ENCODE measurements at regions of chr14 and their contacts with region 1.

Region 1: GRCh38 chr14:55354500-55354899 is 57.1 kb downstream of the ATG14 start:
- DNase-seq: peak; percentile 24 to 82 (median 66)
- ATAC-seq: peak; percentile 90 to 95 (median 92)
- H3K4me3 ChIP-seq: peak overlapping the region in 1 of 2 donors; percentile 16
- H3K4me3 Mint-ChIP-seq: peak overlapping the region; percentile 55 to 80 (median 55)
- H3K27ac ChIP-seq: peak overlapping the region; percentile 77
- H3K27ac Mint-ChIP-seq: peak overlapping the region; percentile 89 to 98
- H3K4me1 ChIP-seq: peaks cover 9 to 17% of the 10 kb centered on the region in 2 experiments
- H3K4me1 Mint-ChIP-seq: peaks cover 17 to 38% (median 30%) of the 10 kb centered on the region in 3 donors
- H3K27me3 ChIP-seq: no peaks in the 10 kb centered on the region
- H3K27me3 Mint-ChIP-seq: no peaks in the 10 kb centered on the region

Region 2: GRCh38 chr14:55094321-55095157 is 260.0 kb before region 1 on chr14:
- CTCF ChIA-PET with region 1: interaction called in 1 of 2 experiments, 5 read pairs
- POLR2A ChIA-PET with region 1: interaction called in 1 of 2 experiments, 15 read pairs
- DNase-seq: no peak
- ATAC-seq: no peak
- H3K4me3 ChIP-seq: no peak overlapping the region
- H3K4me3 Mint-ChIP-seq: no peak overlapping the region
- H3K27ac ChIP-seq: no peak overlapping the region
- H3K27ac Mint-ChIP-seq: no peak overlapping the region
- H3K4me1 ChIP-seq: peaks cover 0 to 17% of the 10 kb centered on the region in 2 experiments
- H3K4me1 Mint-ChIP-seq: peaks cover 9 to 20% (median 20%) of the 10 kb centered on the region in 3 donors
- H3K27me3 ChIP-seq: no peaks in the 10 kb centered on the region
- H3K27me3 Mint-ChIP-seq: no peaks in the 10 kb centered on the region

Region 3: DNA sequence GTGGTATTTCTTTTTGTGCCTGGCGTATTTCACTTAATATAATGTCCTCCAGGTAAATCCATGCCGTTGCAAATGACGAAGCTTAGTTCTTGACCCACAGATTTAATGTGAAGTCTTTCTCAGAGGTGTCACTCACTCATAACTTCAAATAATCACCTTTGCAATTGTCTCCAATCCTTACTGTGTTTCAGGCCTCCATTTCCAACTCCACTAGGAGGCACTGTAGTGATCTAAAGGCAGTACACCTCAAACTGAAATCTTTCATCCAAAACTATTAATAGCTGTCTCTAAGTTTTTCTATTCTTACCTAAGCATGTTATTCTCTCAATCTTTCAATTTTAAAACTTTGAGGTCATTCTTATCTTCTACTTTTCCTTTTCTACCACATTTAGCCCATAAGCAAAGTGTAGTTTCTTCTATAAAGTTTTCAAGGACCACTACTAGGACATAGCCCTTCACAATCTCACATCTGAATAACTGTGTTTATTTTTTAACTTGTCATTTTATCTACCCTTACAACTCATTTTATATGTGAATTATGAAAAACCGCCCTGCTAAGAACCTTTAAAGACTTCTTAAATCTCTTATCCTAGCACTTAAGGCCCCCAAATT is 108.7 kb before region 1 on chr14:
- CTCF ChIA-PET with region 1: interaction called, 14 to 39 read pairs
- POLR2A ChIA-PET with region 1: interaction called in 1 of 2 experiments, 3 read pairs
- DNase-seq: peak in 23 of 35 experiments; percentile 3 to 65 (median 22)
- ATAC-seq: peak in 3 of 4 experiments; percentile 56 to 67 (median 66)
- H3K4me3 ChIP-seq: no peak overlapping the region
- H3K4me3 Mint-ChIP-seq: no peak overlapping the region
- H3K27ac ChIP-seq: no peak overlapping the region
- H3K27ac Mint-ChIP-seq: no peak overlapping the region
- H3K4me1 ChIP-seq: no peaks in the 10 kb centered on the region
- H3K4me1 Mint-ChIP-seq: no peaks in the 10 kb centered on the region
- H3K27me3 ChIP-seq: peaks cover 0 to 3% of the 10 kb centered on the region in 2 experiments
- H3K27me3 Mint-ChIP-seq: peaks cover 15 to 17% of the 10 kb centered on the region in 2 donors

Region 4: DNA sequence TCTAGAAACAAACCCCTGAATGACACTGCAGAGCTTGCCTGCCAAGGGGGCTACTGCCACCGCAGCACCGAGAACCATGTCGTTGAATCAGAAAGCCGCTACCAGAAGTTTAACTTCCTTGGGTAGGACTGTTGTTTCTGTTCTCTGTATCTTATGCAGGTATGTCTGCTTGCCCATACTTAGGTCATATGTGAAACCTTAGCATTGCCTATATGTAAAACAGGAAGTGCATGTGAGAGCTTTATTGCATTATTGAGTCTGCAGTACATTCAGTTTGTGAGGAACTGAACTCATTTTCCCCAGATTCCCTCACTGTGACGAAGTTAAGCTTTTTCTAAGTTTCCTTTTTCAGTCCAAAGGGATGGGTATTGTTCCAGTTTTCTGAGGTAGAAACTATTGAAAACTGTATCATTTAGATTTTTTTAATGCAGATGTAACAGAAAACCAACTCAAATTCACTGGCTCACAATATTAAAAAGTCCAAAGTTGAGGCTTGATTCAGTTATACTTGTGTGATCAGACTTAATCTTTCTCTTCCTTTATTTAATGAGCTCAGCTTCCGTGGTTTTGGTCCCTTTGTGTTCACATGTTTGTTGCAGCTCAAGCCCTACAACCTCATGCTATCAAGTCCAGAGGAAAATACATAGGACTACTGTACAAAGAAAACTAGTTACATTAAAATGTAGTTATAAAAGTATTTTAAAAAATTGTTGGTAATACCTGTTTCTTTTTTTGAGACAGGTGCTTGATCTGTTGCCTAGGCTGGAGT is 76.3 kb before region 1 on chr14:
- CTCF ChIA-PET with region 1: interaction called in 1 of 2 experiments, 85 read pairs
- POLR2A ChIA-PET with region 1: interaction called in 1 of 2 experiments, 3 read pairs
- DNase-seq: peak in 2 of 35 experiments; percentile 0 to 20
- ATAC-seq: peak; percentile 48 to 76 (median 68)
- H3K4me3 ChIP-seq: no peak overlapping the region
- H3K4me3 Mint-ChIP-seq: peak overlapping the region; percentile 56 to 65 (median 65)
- H3K27ac ChIP-seq: peak overlapping the region; percentile 24
- H3K27ac Mint-ChIP-seq: peak overlapping the region; percentile 82 to 86
- H3K4me1 ChIP-seq: peaks cover 10 to 14% of the 10 kb centered on the region in 2 experiments
- H3K4me1 Mint-ChIP-seq: peaks cover 76 to 77% (median 77%) of the 10 kb centered on the region in 3 donors
- H3K27me3 ChIP-seq: no peaks in the 10 kb centered on the region
- H3K27me3 Mint-ChIP-seq: no peaks in the 10 kb centered on the region

Region 5: GRCh38 chr14:55316567-55316966 is 37.9 kb before region 1 on chr14:
- CTCF ChIA-PET with region 1: interaction called, 3 to 10 read pairs
- POLR2A ChIA-PET with region 1: interaction called in 1 of 2 experiments, 8 read pairs
- DNase-seq: no peak
- ATAC-seq: no peak
- H3K4me3 ChIP-seq: no peak overlapping the region
- H3K4me3 Mint-ChIP-seq: no peak overlapping the region
- H3K27ac ChIP-seq: no peak overlapping the region
- H3K27ac Mint-ChIP-seq: peak overlapping the region in 1 of 2 donors; percentile 61
- H3K4me1 ChIP-seq: no peaks in the 10 kb centered on the region
- H3K4me1 Mint-ChIP-seq: peaks cover 0 to 24% (median 11%) of the 10 kb centered on the region in 3 donors
- H3K27me3 ChIP-seq: no peaks in the 10 kb centered on the region
- H3K27me3 Mint-ChIP-seq: no peaks in the 10 kb centered on the region

Region 6: DNA sequence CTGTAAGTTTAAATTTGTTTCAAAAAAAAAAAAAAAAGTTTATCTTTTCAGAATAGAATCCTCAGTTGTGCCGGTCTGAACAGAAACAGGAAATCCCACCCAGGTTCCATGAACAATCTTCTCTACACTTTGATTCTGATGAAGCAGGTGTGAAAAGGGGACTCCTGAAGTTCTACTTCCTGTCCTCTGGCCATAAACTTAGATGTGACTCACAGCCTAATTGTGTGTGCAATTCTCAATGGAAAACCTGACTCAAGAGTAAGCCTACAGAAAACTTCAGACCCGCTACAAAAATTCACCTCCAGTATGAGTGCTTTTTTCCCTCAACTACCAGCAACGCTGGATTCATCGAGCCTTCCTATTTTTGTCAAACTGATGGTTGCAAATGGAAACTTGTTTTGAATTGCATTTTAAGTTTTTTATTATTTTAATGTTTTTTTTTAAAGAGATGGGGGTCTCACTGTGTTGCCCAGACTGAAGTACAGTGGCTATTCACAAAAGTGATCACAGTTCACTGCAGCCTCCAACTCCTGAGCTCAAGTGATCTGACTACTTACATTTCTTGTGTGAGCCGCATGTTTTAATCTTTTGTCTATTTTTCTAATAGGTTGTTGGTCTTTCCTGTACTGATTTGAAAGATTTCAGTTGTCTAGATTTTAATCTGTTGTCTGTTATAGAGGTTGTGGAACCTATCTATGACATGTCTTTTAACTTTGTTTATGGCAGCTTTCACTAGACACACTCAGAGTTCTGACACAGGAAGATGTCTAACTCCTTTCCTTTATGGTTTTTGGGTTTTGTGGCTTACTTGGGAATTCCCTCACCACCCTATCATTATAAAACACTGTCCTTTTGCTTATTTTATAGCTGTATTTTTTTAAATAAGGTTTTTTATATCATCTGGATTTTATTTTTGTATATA is 19.5 kb after region 1 on chr14:
- CTCF ChIA-PET with region 1: interaction called, 3 to 15 read pairs
- POLR2A ChIA-PET with region 1: no interaction called
- DNase-seq: peak in 4 of 35 experiments; percentile 11 to 82 (median 28)
- ATAC-seq: peak; percentile 70 to 92 (median 78)
- H3K4me3 ChIP-seq: no peak overlapping the region
- H3K4me3 Mint-ChIP-seq: peak overlapping the region; percentile 35 to 73 (median 46)
- H3K27ac ChIP-seq: peak overlapping the region; percentile 80
- H3K27ac Mint-ChIP-seq: peak overlapping the region; percentile 90 to 95
- H3K4me1 ChIP-seq: peaks cover 14 to 19% of the 10 kb centered on the region in 2 experiments
- H3K4me1 Mint-ChIP-seq: peaks cover 31 to 46% (median 36%) of the 10 kb centered on the region in 3 donors
- H3K27me3 ChIP-seq: no peaks in the 10 kb centered on the region
- H3K27me3 Mint-ChIP-seq: no peaks in the 10 kb centered on the region

Region 7: DNA sequence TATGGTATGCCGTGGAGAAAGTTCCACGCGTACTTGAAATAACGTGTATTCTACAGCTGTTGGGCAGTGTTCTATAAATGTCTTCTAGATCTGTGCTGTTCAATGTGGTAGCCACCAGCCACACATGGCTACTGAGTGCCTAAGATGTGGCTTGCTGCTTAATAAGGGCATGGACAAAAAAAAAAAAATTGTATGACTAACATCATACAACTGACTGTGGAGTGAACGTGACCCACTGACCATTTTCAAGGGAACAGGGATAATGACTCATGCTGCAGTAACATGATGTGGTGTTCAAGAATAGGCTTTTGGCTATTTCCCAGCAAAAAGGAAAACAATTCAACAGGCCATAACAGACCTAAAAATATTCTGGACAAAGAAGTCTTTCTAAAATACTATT is 44.2 kb after region 1 on chr14:
- CTCF ChIA-PET with region 1: no interaction called
- POLR2A ChIA-PET with region 1: no interaction called
- DNase-seq: no peak
- ATAC-seq: no peak
- H3K4me3 ChIP-seq: no peak overlapping the region
- H3K4me3 Mint-ChIP-seq: no peak overlapping the region
- H3K27ac ChIP-seq: no peak overlapping the region
- H3K27ac Mint-ChIP-seq: no peak overlapping the region
- H3K4me1 ChIP-seq: no peaks in the 10 kb centered on the region
- H3K4me1 Mint-ChIP-seq: peaks cover 26 to 33% (median 28%) of the 10 kb centered on the region in 3 donors
- H3K27me3 ChIP-seq: no peaks in the 10 kb centered on the region
- H3K27me3 Mint-ChIP-seq: no peaks in the 10 kb centered on the region

Region 8: DNA sequence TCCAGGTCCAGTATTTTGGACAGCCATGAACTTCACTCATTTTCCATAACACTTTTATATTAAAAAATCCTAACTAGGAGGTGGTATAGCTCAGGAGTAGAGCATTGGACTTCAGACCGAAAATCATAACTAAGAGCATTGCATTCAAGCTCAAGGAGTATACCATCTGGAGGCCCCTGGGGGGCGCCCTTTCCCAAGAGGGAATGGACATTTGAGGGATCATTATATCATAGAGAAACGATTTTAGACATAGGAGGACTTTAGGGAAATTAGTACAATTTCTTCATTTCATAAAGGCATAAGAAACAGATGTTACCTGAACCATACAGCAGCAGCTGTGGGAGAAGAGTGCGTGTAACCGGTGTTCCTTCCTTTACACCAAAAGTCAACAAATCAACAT is 62.4 kb after region 1 on chr14:
- CTCF ChIA-PET with region 1: no interaction called
- POLR2A ChIA-PET with region 1: no interaction called
- DNase-seq: peak in 6 of 35 experiments; percentile 3 to 28 (median 16)
- ATAC-seq: peak in 1 of 4 experiments; percentile 34
- H3K4me3 ChIP-seq: no peak overlapping the region
- H3K4me3 Mint-ChIP-seq: no peak overlapping the region
- H3K27ac ChIP-seq: no peak overlapping the region
- H3K27ac Mint-ChIP-seq: no peak overlapping the region
- H3K4me1 ChIP-seq: peaks cover 5 to 7% of the 10 kb centered on the region in 2 experiments
- H3K4me1 Mint-ChIP-seq: peaks cover 6 to 12% (median 9%) of the 10 kb centered on the region in 3 donors
- H3K27me3 ChIP-seq: no peaks in the 10 kb centered on the region
- H3K27me3 Mint-ChIP-seq: no peaks in the 10 kb centered on the region

Region 9: GRCh38 chr14:55454264-55455002 is 99.9 kb after region 1 on chr14:
- CTCF ChIA-PET with region 1: no interaction called
- POLR2A ChIA-PET with region 1: no interaction called
- DNase-seq: no peak
- ATAC-seq: no peak
- H3K4me3 ChIP-seq: no peak overlapping the region
- H3K4me3 Mint-ChIP-seq: no peak overlapping the region
- H3K27ac ChIP-seq: no peak overlapping the region
- H3K27ac Mint-ChIP-seq: no peak overlapping the region
- H3K4me1 ChIP-seq: no peaks in the 10 kb centered on the region
- H3K4me1 Mint-ChIP-seq: peaks cover 0 to 3% (median 0%) of the 10 kb centered on the region in 3 donors
- H3K27me3 ChIP-seq: peaks cover 0 to 8% of the 10 kb centered on the region in 2 experiments
- H3K27me3 Mint-ChIP-seq: no peaks in the 10 kb centered on the region

Region 10: DNA sequence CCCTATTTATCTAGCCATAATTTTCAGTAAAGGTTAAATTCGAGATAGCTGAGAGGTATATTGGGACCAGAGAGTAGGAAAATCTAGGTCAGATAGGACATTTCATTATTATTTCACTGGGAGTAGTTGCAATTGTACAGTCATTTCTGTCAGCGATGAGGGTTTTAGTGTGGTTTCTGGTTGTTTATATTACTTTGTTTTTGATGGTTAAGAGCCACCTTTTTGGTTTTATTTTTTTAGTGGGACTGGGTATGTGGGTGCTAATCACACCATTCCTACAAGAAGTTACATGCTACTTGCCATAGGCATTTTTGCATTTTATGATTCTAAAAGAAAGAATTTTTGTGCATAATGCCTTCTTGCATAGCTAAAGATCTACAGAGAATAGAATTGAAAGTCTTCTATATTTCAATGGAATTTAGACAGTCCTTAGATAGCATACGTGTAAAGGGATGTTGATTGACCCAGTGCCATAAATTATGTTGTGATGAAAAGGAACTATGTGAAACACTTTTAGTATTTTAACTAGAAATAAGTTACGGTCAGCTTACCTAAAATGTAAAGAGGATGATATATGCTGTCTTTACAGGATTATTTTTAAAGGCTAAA is 310.7 kb after region 1 on chr14:
- CTCF ChIA-PET with region 1: no interaction called
- POLR2A ChIA-PET with region 1: no interaction called
- DNase-seq: no peak
- ATAC-seq: no peak
- H3K4me3 ChIP-seq: no peak overlapping the region
- H3K4me3 Mint-ChIP-seq: no peak overlapping the region
- H3K27ac ChIP-seq: no peak overlapping the region
- H3K27ac Mint-ChIP-seq: peak overlapping the region; percentile 39 to 55
- H3K4me1 ChIP-seq: no peaks in the 10 kb centered on the region
- H3K4me1 Mint-ChIP-seq: peaks cover 0 to 17% (median 15%) of the 10 kb centered on the region in 3 donors
- H3K27me3 ChIP-seq: no peaks in the 10 kb centered on the region
- H3K27me3 Mint-ChIP-seq: no peaks in the 10 kb centered on the region